ENCODE measurements at regions of chr16 and their contacts with region 1.

Region 1: DNA sequence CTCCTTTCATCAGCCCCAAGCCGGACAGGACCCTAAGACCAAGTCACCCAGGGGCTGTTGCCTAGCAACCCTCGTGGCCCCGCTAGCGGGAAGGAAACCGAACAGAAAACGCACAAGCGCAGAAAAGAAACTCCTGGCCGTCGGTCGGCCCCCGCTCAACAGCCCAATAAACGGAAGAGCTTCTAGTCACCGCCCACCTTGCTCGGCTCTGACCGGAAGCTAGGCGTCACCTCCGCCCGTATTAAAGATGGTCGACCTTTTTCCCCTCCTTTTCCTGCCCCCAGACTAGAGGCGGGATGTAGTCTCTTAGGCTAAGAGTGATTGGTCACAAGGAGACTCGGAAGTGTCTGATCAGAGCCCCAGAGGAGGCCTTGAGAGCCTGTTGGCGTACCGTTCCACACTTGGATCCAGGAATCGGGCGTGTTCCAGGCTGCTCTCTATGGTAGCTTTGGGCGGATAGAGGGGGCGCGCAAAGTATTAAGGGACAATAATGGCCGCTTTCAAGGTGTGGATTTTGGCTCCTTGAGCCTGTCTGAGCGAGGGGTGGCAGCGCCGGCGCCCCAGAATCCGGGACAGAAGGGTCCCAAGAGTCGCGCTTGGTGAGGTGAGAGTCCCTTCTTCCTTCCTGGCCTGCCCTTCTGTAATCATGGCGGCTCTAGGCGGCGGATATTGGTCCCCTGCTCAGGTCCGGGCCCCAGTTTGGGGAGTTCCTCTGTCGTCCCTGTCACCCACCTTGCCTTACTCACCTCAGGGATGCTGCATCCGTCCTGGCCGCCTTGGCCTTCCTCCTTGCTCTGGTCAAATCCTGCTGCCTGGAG is at the starts of genes DHX38 and TXNL4B:
- DNase-seq: peak; percentile 88 to 100 (median 96)

Region 2: GRCh38 chr16:71883849-71884638 is 209.6 kb before region 1 on chr16 and contains the start of gene ZNF821:
- intact Hi-C with region 1: loop called (anchors 10 kb)
- DNase-seq: peak; percentile 36 to 90 (median 80)

Region 3: GRCh38 chr16:72008424-72009216 is 85.0 kb before region 1 on chr16 and contains the start of gene DHODH:
- intact Hi-C with region 1: loop called (anchors 2 kb)
- DNase-seq: peak; percentile 94 to 99 (median 98)

Region 4: DNA sequence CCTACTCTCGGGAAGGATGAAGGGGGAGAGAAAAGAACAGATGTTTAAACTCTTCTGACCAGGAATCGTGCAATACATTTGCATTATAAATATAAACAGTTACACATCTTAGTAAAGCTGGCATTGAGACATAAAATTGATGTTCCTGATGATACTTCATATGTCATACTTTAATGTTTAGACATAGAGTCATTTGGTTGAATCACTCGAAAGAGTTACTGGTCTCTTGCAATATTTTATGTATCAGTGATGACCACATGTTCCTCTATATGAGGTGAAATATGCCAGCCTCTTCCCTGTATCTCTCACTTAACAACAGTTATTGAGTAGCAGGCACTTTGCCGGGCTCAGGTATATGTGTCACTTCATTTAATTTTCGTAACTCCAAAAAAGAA is 128.0 kb after region 1 on chr16:
- intact Hi-C with region 1: no loop called
- DNase-seq: no peak

Measured in head of caudate nucleus (tissue), 42 donors.